CD8-positive, alpha-beta T cell (primary cell): ENCODE measurements at regions of chr3 and their contacts with region 1.

Region 1: DNA sequence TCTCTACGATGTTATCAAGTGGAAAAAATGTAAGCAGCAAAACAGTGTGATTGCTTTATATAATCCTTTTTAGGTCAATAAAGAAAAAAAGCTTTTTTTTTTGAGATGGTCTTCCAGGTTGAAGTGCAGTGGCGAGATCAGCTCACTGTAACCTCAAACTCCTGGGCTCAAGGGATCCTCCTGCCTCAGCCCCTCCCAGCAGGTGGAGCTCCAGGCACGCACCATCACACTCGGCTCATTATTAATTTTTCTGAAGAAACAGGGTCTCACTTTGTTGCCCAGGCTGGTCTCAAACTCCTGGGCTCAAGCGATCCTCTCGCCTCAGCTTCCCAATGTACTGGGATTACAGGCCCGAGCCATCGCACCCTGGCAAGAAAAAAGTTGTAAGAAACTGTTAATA is 17.3 kb downstream of the RNF168 start:
- DNase-seq: peak in 6 of 9 experiments; percentile 3 to 52 (median 32)
- ATAC-seq: peak; percentile 51
- H3K4me3 ChIP-seq: no peak overlapping the region
- H3K4me3 Mint-ChIP-seq: no peak overlapping the region
- H3K27ac ChIP-seq: no peak overlapping the region
- H3K27ac Mint-ChIP-seq: peak overlapping the region; percentile 32
- H3K4me1 ChIP-seq: no peaks in the 10 kb centered on the region
- H3K4me1 Mint-ChIP-seq: peaks cover 17% of the 10 kb centered on the region
- H3K27me3 ChIP-seq: no peaks in the 10 kb centered on the region
- H3K27me3 Mint-ChIP-seq: no peaks in the 10 kb centered on the region
- CTCF ChIP-seq: peak; percentile 40

Region 2: DNA sequence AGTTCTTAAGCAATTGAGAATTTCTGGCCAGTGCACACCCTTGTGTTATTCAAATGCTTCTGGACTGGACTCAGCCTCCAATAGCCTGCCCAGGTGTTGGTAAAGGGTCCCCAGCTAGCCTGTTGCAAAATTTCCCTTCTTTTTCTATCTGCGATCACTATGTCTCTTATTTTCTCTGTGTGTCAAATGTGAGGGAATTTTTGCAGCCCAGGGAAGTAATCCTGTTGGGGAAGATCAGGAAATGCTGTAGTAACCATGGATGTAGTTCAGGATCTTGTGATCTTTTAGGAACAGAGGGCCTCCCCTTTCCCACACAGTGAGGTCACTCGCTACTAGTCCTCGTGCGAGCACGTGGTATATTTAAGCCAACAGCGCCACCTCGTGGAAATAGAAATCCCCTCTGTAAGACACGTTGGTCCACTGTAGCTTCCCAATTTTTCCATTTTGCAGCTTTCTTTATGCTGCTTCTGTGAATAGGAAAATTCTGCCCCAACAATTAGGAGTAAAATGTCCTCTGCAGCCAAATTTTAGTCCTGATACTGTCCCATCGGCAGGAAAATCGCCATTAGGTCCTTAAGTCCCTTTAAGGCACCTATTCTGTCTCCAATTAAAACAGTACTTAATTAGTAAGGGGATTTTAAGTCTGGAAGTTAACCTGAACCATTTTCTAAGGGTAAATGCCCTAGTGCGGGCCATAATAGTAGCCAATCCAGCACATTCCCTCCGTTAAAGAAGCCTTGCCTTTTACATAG is 32.9 kb after region 1 on chr3:
- CTCF ChIA-PET with region 1: interaction called, 21 read pairs
- POLR2A ChIA-PET with region 1: no interaction called
- intact Hi-C with region 1: loop called (anchors 1 kb)
- DNase-seq: peak in 8 of 9 experiments; percentile 15 to 75 (median 62)
- ATAC-seq: no peak
- H3K4me3 ChIP-seq: peak overlapping the region in 1 of 2 experiments; percentile 1
- H3K4me3 Mint-ChIP-seq: no peak overlapping the region
- H3K27ac ChIP-seq: no peak overlapping the region
- H3K27ac Mint-ChIP-seq: no peak overlapping the region
- H3K4me1 ChIP-seq: no peaks in the 10 kb centered on the region
- H3K4me1 Mint-ChIP-seq: no peaks in the 10 kb centered on the region
- H3K27me3 ChIP-seq: no peaks in the 10 kb centered on the region
- H3K27me3 Mint-ChIP-seq: no peaks in the 10 kb centered on the region
- CTCF ChIP-seq: peak; percentile 28

Region 3: DNA sequence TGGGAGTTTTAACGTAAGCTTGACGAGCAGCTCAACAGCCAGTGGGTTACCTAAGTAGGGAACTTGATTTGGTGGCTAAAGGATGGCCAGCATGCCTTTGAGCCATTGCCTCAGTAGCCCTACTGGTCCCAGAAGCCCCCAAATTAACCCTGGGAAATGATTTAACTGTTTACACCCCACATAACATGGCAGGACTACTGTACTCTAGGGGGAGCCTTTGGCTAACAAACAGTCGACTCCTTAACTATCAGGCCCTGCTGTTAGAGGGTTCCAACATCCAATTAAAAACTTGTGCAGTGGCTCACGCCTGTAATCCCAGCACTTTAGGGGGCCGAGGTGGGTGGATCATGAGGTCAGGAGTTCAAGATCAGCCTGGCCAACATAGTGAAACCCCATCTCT is 38.3 kb after region 1 on chr3:
- CTCF ChIA-PET with region 1: interaction called, 21 read pairs
- POLR2A ChIA-PET with region 1: no interaction called
- intact Hi-C with region 1: loop called (anchors 1 kb)
- DNase-seq: no peak
- ATAC-seq: no peak
- H3K4me3 ChIP-seq: no peak overlapping the region
- H3K4me3 Mint-ChIP-seq: no peak overlapping the region
- H3K27ac ChIP-seq: no peak overlapping the region
- H3K27ac Mint-ChIP-seq: no peak overlapping the region
- H3K4me1 ChIP-seq: no peaks in the 10 kb centered on the region
- H3K4me1 Mint-ChIP-seq: peaks cover 4% of the 10 kb centered on the region
- H3K27me3 ChIP-seq: no peaks in the 10 kb centered on the region
- H3K27me3 Mint-ChIP-seq: peaks cover 4% of the 10 kb centered on the region
- CTCF ChIP-seq: no peak

Region 4: GRCh38 chr3:196932600-196932999 is 446.3 kb after region 1 on chr3:
- CTCF ChIA-PET with region 1: no interaction called
- POLR2A ChIA-PET with region 1: no interaction called
- intact Hi-C with region 1: no loop called
- DNase-seq: no peak
- ATAC-seq: no peak
- H3K4me3 ChIP-seq: no peak overlapping the region
- H3K4me3 Mint-ChIP-seq: no peak overlapping the region
- H3K27ac ChIP-seq: no peak overlapping the region
- H3K27ac Mint-ChIP-seq: no peak overlapping the region
- H3K4me1 ChIP-seq: no peaks in the 10 kb centered on the region
- H3K4me1 Mint-ChIP-seq: no peaks in the 10 kb centered on the region
- H3K27me3 ChIP-seq: no peaks in the 10 kb centered on the region
- H3K27me3 Mint-ChIP-seq: no peaks in the 10 kb centered on the region
- CTCF ChIP-seq: no peak